A673 (cell line): ENCODE measurements at regions of chr21 and their contacts with region 1.

Region 1: DNA sequence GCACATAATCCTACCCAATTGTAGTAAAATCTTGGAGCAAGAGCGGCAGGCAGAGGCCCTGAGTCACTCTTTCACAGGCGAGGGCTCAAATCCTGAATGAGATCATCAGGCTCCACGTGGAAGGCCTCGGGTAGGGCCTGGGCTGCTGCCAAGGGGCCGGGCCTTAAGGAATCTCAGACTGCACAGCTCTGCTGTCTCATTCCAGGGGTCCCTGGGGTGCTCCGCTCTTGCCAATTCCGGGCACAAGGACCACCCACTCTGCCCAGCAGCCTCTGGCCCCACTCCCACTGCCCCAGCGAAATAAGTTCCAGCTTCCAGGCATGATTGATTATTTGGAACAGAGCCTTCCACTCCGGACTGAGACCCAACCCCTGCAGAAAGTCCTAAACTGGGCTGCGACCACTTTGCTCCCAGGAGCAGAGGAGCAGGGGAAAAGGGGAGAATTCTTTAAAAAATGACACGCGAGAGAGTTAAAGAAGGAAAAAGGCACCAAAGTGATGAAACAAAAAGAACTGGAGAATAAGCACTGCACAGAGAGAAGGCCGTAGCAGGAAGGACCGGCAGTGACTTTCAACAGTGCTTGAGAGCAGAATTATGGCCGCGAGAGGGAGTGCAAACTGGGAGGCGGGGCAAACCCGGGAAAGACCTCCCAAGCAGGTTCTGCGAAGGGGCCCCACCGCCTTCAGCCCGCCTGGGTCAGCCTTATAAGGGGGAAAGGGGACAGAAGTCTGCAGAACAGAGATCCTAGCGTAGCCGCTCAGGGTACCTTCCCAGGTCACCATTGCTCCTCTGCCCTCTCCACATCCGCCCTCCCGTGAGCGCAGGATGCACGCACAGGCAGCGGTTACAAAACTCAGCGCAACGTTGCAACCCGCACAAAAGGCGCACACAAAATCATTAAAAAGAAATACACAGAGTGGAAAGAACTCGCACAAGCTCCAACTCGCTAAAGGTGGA is 2.0 kb downstream of the ADAMTS1 start:
- DNase-seq: peak; percentile 97
- H3K4me3 ChIP-seq: peak overlapping the region; percentile 69
- H3K27ac ChIP-seq: peak overlapping the region; percentile 90
- H3K4me1 ChIP-seq: peaks cover 18% of the 10 kb centered on the region
- H3K27me3 ChIP-seq: no peaks in the 10 kb centered on the region
- CTCF ChIP-seq: peak; percentile 56

Region 2: DNA sequence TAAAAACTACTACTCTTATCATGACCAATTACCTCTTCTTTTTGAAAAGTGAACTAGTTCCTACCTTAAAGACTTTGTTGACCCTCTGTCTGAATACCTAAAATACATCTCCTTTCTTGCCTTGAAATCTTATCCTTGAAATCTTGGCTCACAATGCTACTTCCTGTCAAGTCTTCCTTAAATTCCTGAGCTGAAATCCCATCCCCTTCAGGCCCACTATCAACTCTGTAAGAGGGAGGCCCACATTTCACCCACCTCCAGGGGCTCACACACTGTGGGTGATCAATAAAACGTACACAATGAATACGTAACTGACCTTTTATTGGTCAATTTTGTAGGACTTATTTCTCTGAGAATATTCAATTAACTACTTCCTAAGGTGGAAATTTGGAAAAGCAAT is 760.7 kb before region 1 on chr21:
- CTCF ChIA-PET with region 1: no interaction called
- POLR2A ChIA-PET with region 1: no interaction called
- intact Hi-C with region 1: loop called (anchors 5 kb)
- DNase-seq: no peak
- H3K4me3 ChIP-seq: no peak overlapping the region
- H3K27ac ChIP-seq: no peak overlapping the region
- H3K4me1 ChIP-seq: peaks cover 24% of the 10 kb centered on the region
- H3K27me3 ChIP-seq: no peaks in the 10 kb centered on the region
- CTCF ChIP-seq: no peak

Region 3: DNA sequence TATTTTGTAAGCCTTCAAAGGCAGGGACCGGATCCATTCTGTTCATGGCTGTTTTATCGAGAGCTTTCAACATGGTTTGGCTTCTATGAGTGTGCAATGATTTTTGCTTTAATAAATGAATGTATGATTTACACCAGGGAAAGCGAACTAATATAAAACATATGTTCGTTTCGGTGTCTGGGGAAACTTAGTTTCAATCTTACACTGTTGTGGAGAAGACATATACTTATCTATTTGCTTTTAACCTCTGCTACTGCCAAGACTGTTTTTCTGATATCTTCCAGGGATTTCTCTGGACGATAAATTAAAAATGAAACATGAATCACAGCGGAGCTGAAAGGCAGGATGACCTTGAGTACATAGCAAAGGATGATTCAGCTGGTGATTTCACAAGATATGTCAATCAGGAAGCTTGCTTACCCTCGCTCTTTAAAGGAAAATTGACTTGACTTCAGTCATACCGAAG is 255.5 kb before region 1 on chr21:
- CTCF ChIA-PET with region 1: no interaction called
- POLR2A ChIA-PET with region 1: no interaction called
- intact Hi-C with region 1: no loop called
- DNase-seq: peak; percentile 58
- H3K4me3 ChIP-seq: peak overlapping the region; percentile 26
- H3K27ac ChIP-seq: peak overlapping the region; percentile 9
- H3K4me1 ChIP-seq: peaks cover 22% of the 10 kb centered on the region
- H3K27me3 ChIP-seq: no peaks in the 10 kb centered on the region
- CTCF ChIP-seq: no peak